ENCODE measurements at regions of chr3 and their contacts with region 1.

Region 1: GRCh38 chr3:4571690-4572334 is 78.7 kb downstream of the ITPR1 start:
- DNase-seq: peak in 2 of 9 donors; percentile 12 to 18
- ATAC-seq: peak; percentile 49
- H3K4me3 ChIP-seq: no peak overlapping the region
- H3K4me3 Mint-ChIP-seq: no peak overlapping the region
- H3K27ac ChIP-seq: no peak overlapping the region
- H3K27ac Mint-ChIP-seq: peak overlapping the region in 2 of 9 donors; percentile 28 to 40
- H3K4me1 ChIP-seq: no peaks in the 10 kb centered on the region
- H3K4me1 Mint-ChIP-seq: peaks cover 6 to 59% (median 43%) of the 10 kb centered on the region in 7 donors
- H3K27me3 ChIP-seq: no peaks in the 10 kb centered on the region
- H3K27me3 Mint-ChIP-seq: no peaks in the 10 kb centered on the region

Region 2: GRCh38 chr3:4438293-4438692 is 133.5 kb before region 1 on chr3:
- CTCF ChIA-PET with region 1: no interaction called
- POLR2A ChIA-PET with region 1: no interaction called
- intact Hi-C with region 1: no loop called
- DNase-seq: no peak
- ATAC-seq: no peak
- H3K4me3 ChIP-seq: no peak overlapping the region
- H3K4me3 Mint-ChIP-seq: no peak overlapping the region
- H3K27ac ChIP-seq: no peak overlapping the region
- H3K27ac Mint-ChIP-seq: no peak overlapping the region
- H3K4me1 ChIP-seq: no peaks in the 10 kb centered on the region
- H3K4me1 Mint-ChIP-seq: peaks cover 0 to 4% (median 3%) of the 10 kb centered on the region in 7 donors
- H3K27me3 ChIP-seq: no peaks in the 10 kb centered on the region
- H3K27me3 Mint-ChIP-seq: no peaks in the 10 kb centered on the region

Region 3: DNA sequence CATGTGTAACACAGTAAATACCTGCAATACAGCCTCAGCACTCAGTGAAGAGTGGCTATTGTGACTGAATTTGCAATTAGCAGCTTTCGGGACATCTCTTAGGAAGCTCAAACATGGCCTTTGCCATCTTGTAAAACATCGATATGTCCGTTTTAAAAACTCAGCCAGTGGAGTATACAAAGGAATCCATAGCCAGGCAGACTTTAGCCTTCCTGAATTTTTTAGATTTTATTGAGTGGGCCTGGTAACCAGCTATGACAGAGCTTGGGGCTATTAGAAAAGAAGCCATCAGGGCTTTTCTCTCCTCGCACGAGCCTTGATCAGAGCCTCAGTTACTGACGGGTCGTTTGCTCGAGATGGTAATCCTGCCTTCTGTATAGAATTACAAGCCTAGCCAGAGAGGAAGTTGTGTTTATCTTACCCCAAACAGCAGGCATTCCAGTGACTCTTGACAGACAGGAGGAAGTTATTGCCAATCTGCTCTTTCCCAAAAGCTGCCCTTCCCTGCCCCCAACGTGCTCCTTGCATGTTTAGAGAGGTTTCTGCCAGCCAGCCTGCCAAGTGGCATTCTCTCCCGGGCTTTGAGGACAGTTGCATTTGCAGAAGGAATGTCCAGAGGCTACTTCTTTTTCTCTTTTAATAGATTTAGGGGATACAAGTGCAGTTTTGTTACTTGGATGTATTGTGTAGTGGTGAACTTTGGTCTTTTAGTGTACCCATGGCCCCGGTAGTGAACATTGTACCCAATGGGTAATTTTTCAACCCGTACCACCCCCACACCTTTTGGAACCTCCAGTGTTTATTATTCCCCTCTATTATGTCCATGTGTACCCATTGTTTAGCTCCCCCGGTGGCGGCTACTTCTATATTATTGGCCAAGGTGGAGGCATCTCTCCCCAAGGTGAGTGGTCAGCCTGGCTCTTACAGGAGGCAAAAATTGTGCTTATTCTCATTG is 38.0 kb before region 1 on chr3:
- CTCF ChIA-PET with region 1: no interaction called
- POLR2A ChIA-PET with region 1: no interaction called
- intact Hi-C with region 1: loop called in 1 of 2 experiments (anchors 5 kb)
- DNase-seq: no peak
- ATAC-seq: peak; percentile 54
- H3K4me3 ChIP-seq: no peak overlapping the region
- H3K4me3 Mint-ChIP-seq: no peak overlapping the region
- H3K27ac ChIP-seq: no peak overlapping the region
- H3K27ac Mint-ChIP-seq: no peak overlapping the region
- H3K4me1 ChIP-seq: no peaks in the 10 kb centered on the region
- H3K4me1 Mint-ChIP-seq: peaks cover 0 to 64% (median 48%) of the 10 kb centered on the region in 7 donors
- H3K27me3 ChIP-seq: no peaks in the 10 kb centered on the region
- H3K27me3 Mint-ChIP-seq: no peaks in the 10 kb centered on the region

Measured in naive thymus-derived CD4-positive, alpha-beta T cell (primary cell).